ENCODE measurements at regions of chr19 and their contacts with region 1.

Region 1: DNA sequence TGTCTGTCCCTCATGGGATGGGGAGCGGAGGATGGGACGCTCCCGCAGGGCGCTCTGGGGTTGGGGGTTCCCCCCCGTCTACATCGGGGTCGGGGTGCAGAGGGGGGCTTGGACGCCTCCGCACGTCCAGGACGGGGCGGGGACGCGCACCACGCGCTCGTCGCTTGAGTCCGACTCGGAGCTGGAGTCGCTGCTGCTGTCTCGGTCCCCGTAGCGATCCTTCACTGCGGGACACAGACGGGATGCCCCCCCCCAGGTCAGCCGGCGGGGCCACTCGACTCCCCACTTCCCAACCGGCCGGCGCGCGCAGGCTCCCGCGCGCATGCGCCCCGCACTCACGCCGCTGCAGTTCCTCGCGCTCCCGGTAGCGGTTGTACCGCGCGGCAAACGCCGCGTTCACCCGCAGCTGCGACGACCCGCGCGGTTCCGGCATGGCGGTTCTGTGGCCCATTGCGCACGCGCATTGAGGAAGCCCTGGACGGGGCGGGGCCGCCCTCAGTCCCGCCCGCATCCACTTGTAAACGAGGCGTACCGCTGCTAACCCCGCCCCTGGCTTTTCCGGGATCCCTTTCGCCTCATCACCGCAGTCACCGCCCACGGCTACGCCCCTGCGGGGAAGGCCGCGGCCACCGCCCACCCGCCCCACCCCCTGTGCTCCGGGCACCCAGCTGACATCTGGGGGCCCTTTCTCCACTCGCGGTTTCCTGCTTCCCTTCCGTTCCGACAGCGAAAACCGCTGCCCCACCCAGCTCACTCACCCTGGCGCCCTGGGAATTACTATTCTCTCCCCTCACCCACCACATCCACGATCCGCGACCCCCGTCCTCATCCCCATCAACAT is at the start of gene KRI1:
- DNase-seq: peak; percentile 99
- total RNA-seq, gene KRI1: 10.8 TPM

Region 2: DNA sequence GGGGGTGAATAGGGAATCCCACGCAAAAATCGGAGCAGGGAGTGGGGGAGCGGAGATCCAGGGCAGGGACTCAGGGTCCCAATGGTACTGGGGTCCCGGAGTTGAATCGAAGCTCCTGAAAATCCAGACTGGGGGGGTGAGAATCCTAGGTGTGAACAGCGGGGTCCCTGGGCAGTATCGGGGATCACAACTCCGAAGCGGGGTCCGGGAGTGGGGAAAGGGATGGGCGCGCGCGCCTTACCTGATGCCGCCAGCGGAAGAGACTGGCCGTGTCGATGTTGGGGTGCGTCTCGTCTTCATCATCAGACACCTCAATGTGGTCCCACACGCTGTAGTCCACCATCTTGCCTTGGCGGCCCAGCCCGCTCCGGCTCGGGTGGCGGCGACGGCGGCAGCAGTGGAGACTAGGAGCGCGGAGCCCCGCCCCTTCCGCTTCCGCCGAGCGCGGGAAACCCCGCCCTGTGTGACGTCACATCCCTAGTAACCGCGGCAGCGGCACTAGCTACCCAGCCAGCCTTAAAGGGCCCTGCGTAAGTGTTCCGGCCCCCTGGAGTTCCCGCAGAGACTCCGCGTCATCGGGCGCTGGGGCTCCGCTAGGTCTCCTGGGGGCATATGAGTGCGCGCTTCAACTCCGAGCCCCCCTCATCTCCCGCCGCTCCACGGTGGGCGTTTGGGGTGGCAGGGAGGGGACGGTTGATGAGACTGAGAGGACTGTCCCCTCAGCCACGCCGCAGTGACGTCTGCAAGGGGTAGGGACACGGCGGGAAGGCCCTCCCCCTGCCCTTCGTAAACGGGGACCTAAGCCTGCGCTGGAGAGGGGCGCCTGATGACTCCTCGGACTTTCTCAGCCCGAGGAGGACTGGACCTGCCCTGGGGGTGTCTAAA is 162.4 kb before region 1 on chr19 and contains the start of gene CDC37:
- intact Hi-C with region 1: loop called (anchors 5 kb)
- DNase-seq: peak; percentile 99
- total RNA-seq, gene CDC37: 140 TPM

Region 3: GRCh38 chr19:10543420-10544241 is 22.2 kb before region 1 on chr19 and contains the start of gene ATG4D:
- intact Hi-C with region 1: loop called (anchors 2 kb)
- DNase-seq: peak; percentile 91
- total RNA-seq, gene ATG4D: 47.6 TPM

Region 4: GRCh38 chr19:10553943-10554381 is 11.8 kb before region 1 on chr19:
- intact Hi-C with region 1: no loop called
- DNase-seq: no peak

Region 5: GRCh38 chr19:10653715-10654492 is 88.1 kb after region 1 on chr19 and contains the start of gene ILF3:
- intact Hi-C with region 1: loop called (anchors 5 kb)
- DNase-seq: peak; percentile 99
- total RNA-seq, gene ILF3: 115 TPM

Measured in cardiac septum (tissue), 1 donor.